ENCODE measurements at regions of chr1 and their contacts with region 1.

Region 1: GRCh38 chr1:24735509-24736375 is 9.5 kb upstream of the CLIC4 start:
- DNase-seq: no peak
- H3K4me3 ChIP-seq: peak overlapping the region; percentile 2 to 16
- H3K27ac ChIP-seq: peak overlapping the region; percentile 46 to 50
- H3K4me1 ChIP-seq: peaks cover 0 to 19% (median 14%) of the 10 kb centered on the region in 4 donors
- H3K27me3 ChIP-seq: no peaks in the 10 kb centered on the region
- CTCF ChIP-seq: no peak

Region 2: GRCh38 chr1:24673336-24673735 is 62.4 kb before region 1 on chr1:
- intact Hi-C with region 1: no loop called
- DNase-seq: no peak
- H3K4me3 ChIP-seq: no peak overlapping the region
- H3K27ac ChIP-seq: no peak overlapping the region
- H3K4me1 ChIP-seq: no peaks in the 10 kb centered on the region
- H3K27me3 ChIP-seq: no peaks in the 10 kb centered on the region
- CTCF ChIP-seq: no peak

Region 3: DNA sequence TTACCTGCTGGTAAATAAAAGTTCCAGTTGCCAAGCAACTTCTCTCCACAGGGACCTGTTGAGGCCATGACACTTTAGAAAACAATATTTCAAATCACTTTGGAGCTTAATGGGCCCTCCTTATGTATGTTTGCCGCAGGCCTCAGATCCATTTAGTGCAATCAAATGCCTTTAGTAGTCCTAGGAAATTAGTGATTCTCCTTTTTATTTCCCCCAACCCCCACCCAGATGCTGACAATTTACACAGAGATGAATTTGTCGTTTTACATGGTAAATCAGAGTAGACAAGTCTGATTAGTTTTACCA is 93.1 kb after region 1 on chr1:
- intact Hi-C with region 1: loop called (anchors 5 kb)
- DNase-seq: no peak
- H3K4me3 ChIP-seq: no peak overlapping the region
- H3K27ac ChIP-seq: peak overlapping the region; percentile 56
- H3K4me1 ChIP-seq: peaks cover 0 to 80% (median 36%) of the 10 kb centered on the region in 4 donors
- H3K27me3 ChIP-seq: no peaks in the 10 kb centered on the region
- CTCF ChIP-seq: no peak